ENCODE measurements at regions of chrX and their contacts with region 1.

Region 1: GRCh38 chrX:10769195-10769594 is 148.8 kb upstream of the MID1 start:
- DNase-seq: peak; percentile 39
- H3K4me3 Mint-ChIP-seq: no peak overlapping the region
- H3K27ac Mint-ChIP-seq: no peak overlapping the region
- H3K4me1 Mint-ChIP-seq: no peaks in the 10 kb centered on the region
- H3K27me3 Mint-ChIP-seq: peaks cover 25% of the 10 kb centered on the region
- CTCF ChIP-seq: peak; percentile 49

Region 2: GRCh38 chrX:10744007-10744406 is 25.2 kb before region 1 on chrX:
- CTCF ChIA-PET with region 1: interaction called, 11 read pairs
- POLR2A ChIA-PET with region 1: interaction called, 4 read pairs
- intact Hi-C with region 1: no loop called
- DNase-seq: no peak
- H3K4me3 Mint-ChIP-seq: no peak overlapping the region
- H3K27ac Mint-ChIP-seq: no peak overlapping the region
- H3K4me1 Mint-ChIP-seq: peaks cover under 1% of the 10 kb centered on the region
- H3K27me3 Mint-ChIP-seq: peaks cover 79% of the 10 kb centered on the region
- CTCF ChIP-seq: no peak

Region 3: GRCh38 chrX:10781847-10782530 is 12.8 kb after region 1 on chrX:
- CTCF ChIA-PET with region 1: interaction called, 23 read pairs
- POLR2A ChIA-PET with region 1: interaction called, 3 read pairs
- intact Hi-C with region 1: no loop called
- DNase-seq: no peak
- H3K4me3 Mint-ChIP-seq: no peak overlapping the region
- H3K27ac Mint-ChIP-seq: no peak overlapping the region
- H3K4me1 Mint-ChIP-seq: no peaks in the 10 kb centered on the region
- H3K27me3 Mint-ChIP-seq: peaks cover 43% of the 10 kb centered on the region
- CTCF ChIP-seq: no peak

Region 4: GRCh38 chrX:11113731-11114130 is 344.5 kb after region 1 on chrX:
- CTCF ChIA-PET with region 1: no interaction called
- POLR2A ChIA-PET with region 1: no interaction called
- intact Hi-C with region 1: no loop called
- DNase-seq: no peak
- H3K4me3 Mint-ChIP-seq: peak overlapping the region; percentile 28
- H3K27ac Mint-ChIP-seq: peak overlapping the region; percentile 73
- H3K4me1 Mint-ChIP-seq: no peaks in the 10 kb centered on the region
- H3K27me3 Mint-ChIP-seq: no peaks in the 10 kb centered on the region
- CTCF ChIP-seq: no peak

Measured in MCF 10A (cell line).